ENCODE measurements at regions of chr6 and their contacts with region 1.

Region 1: DNA sequence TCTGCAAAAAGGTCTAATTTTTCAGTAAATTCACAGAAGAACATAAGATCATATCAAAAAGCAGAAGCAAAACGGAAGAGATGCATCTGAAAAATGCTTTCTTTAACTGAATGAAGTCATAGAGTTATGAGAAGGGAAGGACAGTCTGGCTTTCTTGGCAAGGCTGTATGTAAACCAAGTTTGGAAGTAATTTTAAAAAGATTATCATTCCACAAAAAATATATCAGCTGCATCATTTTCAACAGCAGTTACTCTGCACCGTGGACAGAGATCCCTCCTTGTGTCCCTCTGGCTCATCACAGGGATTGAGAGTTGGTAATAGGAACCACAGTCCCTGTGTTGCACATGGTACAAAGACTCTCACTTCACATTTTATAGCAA is 258.5 kb downstream of the HIVEP2 start:
- DNase-seq: no peak
- H3K4me3 ChIP-seq: no peak overlapping the region
- H3K27ac ChIP-seq: no peak overlapping the region
- H3K4me1 ChIP-seq: 0 out of 2 replicates have a peak, but pooled peaks cover 4% of the 10 kb centered on the region
- H3K27me3 ChIP-seq: no peaks in the 10 kb centered on the region
- CTCF ChIP-seq: no peak

Region 2: DNA sequence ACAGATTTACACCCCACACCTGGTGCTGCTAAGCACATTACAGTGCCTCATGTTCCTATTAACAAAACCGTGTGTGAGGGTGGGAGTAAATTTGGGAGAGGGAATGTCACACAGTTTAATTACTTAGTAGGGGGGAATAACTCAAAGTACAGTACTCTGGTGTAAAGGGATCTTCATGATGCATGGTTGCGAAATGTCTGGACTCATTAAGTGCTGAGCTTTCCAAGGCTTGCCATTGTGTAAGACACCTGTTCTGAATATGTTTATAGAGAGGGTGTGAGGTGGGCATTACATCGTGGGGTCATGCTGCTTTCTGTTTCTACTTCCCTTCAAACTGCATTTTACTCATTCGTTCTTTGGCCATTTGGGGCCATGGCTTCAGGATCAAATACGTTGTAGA is 203.5 kb before region 1 on chr6:
- CTCF ChIA-PET with region 1: no interaction called
- POLR2A ChIA-PET with region 1: no interaction called
- intact Hi-C with region 1: loop called (anchors 5 kb)
- DNase-seq: no peak
- H3K4me3 ChIP-seq: no peak overlapping the region
- H3K27ac ChIP-seq: no peak overlapping the region
- H3K4me1 ChIP-seq: no peaks in the 10 kb centered on the region
- H3K27me3 ChIP-seq: no peaks in the 10 kb centered on the region
- CTCF ChIP-seq: no peak

Region 3: DNA sequence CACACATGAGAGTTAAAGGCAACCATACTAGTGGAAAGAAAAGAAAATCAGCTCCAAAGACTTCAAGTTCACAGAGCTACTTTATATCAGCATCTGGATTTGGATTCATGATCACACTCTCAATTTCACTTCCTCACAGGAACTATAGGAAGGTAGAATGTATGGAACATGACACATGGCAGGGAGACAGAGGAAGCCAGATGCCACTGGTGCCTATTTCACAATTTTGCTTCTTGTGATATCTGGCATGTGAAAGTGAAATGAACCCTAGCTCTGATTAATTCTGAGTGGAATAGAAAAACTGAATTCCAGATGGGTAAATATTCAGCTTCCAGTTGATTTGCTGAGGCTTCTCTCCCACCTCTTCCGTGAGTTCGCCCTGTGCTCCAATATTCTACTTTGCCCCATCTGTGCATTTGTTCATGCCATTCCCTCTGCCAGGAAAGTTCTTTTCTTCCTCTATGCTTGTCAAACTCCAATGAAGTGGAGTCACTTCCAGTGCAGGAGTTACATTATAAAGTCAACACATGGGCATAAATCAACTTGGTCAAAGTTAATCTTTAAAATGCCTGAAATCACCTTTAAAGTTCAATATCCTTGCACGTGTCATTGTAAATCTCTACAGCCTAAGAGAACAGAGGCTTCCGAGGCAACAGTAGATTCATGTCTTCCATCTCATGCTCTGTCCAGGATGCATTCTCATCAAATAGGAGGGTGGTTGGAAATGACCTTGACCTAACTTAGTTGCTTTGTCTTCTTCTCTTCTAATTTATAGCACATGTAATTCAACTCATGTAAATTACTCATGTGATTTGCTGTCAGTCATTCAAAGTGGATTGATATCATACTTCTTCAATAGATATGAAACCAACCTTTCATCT is 16.8 kb before region 1 on chr6:
- CTCF ChIA-PET with region 1: no interaction called
- POLR2A ChIA-PET with region 1: no interaction called
- intact Hi-C with region 1: no loop called
- DNase-seq: no peak
- H3K4me3 ChIP-seq: no peak overlapping the region
- H3K27ac ChIP-seq: no peak overlapping the region
- H3K4me1 ChIP-seq: no peaks in the 10 kb centered on the region
- H3K27me3 ChIP-seq: no peaks in the 10 kb centered on the region
- CTCF ChIP-seq: no peak

Region 4: DNA sequence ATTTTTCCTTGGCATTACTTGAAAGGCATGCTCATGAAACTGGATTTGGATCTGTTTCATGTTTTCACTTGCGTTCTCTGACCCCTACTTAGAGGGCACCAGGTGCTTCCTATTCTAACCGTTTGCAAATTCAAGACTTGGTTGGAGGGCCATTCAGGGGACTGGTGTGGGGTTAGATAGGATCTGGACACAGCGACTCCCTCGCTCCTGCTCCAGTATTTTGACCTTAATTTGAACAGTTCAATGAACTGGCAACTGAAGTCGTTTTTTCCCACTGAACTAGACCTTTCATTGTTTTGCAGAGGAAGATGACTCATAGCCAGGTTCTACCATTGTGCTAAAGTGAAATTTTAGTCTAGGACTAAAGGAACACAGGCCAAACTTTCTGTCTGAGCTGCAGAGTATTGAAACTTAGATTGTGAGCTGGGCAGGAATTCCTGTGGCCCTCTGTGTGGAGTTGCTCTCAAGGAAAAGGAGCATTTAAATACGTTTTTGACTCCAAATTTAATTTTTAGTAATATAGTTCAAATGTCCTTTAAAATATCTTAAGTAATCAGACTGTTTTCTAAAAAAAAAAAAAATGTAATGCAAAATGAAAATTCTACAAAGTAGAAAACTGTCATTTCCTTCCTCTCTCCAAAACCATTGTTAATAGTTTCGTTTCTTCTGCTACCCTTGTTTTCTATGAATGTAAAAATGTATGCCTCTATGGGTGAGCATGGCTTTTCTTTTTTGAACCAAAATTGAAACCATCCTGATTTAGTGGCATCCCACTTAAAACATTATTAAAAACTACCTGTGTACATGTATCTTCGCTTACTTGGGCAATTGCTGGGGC is 1663.4 kb after region 1 on chr6:
- CTCF ChIA-PET with region 1: no interaction called
- POLR2A ChIA-PET with region 1: no interaction called
- intact Hi-C with region 1: no loop called
- DNase-seq: peak in 1 of 2 experiments; percentile 77
- H3K4me3 ChIP-seq: no peak overlapping the region
- H3K27ac ChIP-seq: peak overlapping the region; percentile 72
- H3K4me1 ChIP-seq: peaks cover 36% of the 10 kb centered on the region
- H3K27me3 ChIP-seq: no peaks in the 10 kb centered on the region
- CTCF ChIP-seq: no peak

Measured in PC-9 (cell line).